Endothelial cell of umbilical vein (primary cell): ENCODE measurements at regions of chr3 and their contacts with region 1.

Region 1: GRCh38 chr3:140056043-140056442 is 121.1 kb downstream of the CLSTN2 start:
- DNase-seq: no peak
- H3K4me3 ChIP-seq: no peak overlapping the region
- H3K27ac ChIP-seq: no peak overlapping the region
- H3K4me1 ChIP-seq: no peaks in the 10 kb centered on the region
- H3K27me3 ChIP-seq: no peaks in the 10 kb centered on the region
- CTCF ChIP-seq: no peak
- POLR2A ChIP-seq: no peak

Region 2: DNA sequence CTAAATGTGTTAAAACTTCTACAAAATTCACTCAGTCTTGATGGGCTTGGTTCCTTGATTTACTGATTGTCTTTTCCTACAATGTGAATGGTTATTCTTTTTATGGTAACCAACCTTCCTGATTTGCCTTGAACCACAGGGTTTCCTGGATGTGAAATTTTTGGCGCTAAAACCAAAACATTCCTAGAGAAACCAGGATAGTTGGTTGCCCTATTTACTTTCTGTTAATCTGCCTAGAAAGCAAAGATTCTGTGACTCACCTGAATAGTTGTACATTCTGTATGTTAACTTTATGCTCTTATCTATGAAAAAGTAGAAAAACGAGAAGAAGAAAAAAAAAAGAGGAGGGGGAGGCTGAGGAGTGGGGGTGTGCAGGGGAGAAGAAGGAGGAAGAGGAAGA is 556.5 kb before region 1 on chr3:
- CTCF ChIA-PET with region 1: no interaction called
- POLR2A ChIA-PET with region 1: no interaction called
- dilution Hi-C with region 1: no loop called
- intact Hi-C with region 1: no loop called
- DNase-seq: no peak
- H3K4me3 ChIP-seq: no peak overlapping the region
- H3K27ac ChIP-seq: no peak overlapping the region
- H3K4me1 ChIP-seq: no peaks in the 10 kb centered on the region
- H3K27me3 ChIP-seq: no peaks in the 10 kb centered on the region
- CTCF ChIP-seq: no peak
- POLR2A ChIP-seq: no peak

Region 3: DNA sequence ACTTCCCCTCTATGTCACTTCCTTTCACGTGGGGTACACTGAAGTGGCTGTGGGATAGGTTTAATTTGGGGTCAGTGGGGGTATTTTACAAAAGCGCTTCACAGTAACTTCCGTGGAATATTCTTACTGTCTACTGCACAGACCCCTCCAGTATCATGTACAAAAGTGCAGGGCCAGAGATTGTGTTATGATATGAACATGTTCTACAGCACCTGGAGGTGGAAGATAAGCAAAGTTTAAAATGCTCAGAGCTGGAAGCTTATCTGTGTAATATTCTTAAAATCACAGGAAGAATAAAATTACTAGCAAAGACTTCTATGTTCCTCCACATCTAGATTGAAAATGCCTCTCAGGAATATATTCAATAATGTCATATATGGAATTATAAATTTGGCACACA is 537.7 kb after region 1 on chr3:
- CTCF ChIA-PET with region 1: no interaction called
- POLR2A ChIA-PET with region 1: no interaction called
- dilution Hi-C with region 1: no loop called
- intact Hi-C with region 1: loop called (anchors 5 kb)
- DNase-seq: no peak
- H3K4me3 ChIP-seq: no peak overlapping the region
- H3K27ac ChIP-seq: no peak overlapping the region
- H3K4me1 ChIP-seq: no peaks in the 10 kb centered on the region
- H3K27me3 ChIP-seq: no peaks in the 10 kb centered on the region
- CTCF ChIP-seq: no peak
- POLR2A ChIP-seq: no peak